Dorsolateral prefrontal cortex (tissue), 120 donors: ENCODE measurements at regions of chr1 and their contacts with region 1.

Region 1: GRCh38 chr1:31065310-31066217 is at the start of gene PUM1:
- DNase-seq: peak; percentile 91 to 98 (median 96)
- H3K4me3 ChIP-seq: peak within 1 kb of the TSS; percentile 60 to 92 (median 79)
- H3K27ac ChIP-seq: peak within 1 kb of the TSS; percentile 79 to 99 (median 95)
- H3K27me3 ChIP-seq: no peaks in the 10 kb centered on the region
- CTCF ChIP-seq: peak in 41 of 56 donors; percentile 4 to 62 (median 29)
- total RNA-seq, gene PUM1: 99.6 to 180 (median 142) TPM

Region 2: GRCh38 chr1:30801771-30802198 is 263.8 kb before region 1 on chr1:
- intact Hi-C with region 1: loop called in 1 of 2 experiments (anchors 10 kb)
- DNase-seq: peak; percentile 78 to 93 (median 88)
- H3K4me3 ChIP-seq: peak overlapping the region in 50 of 59 donors; percentile 8 to 60 (median 39)
- H3K27ac ChIP-seq: peak overlapping the region in 26 of 59 donors; percentile 1 to 84 (median 55)
- H3K27me3 ChIP-seq: no peaks in the 10 kb centered on the region
- CTCF ChIP-seq: peak; percentile 74 to 99 (median 97)

Region 3: GRCh38 chr1:30933874-30934252 is 131.7 kb before region 1 on chr1:
- intact Hi-C with region 1: loop called in 1 of 2 experiments (anchors 10 kb)
- DNase-seq: no peak
- H3K4me3 ChIP-seq: no peak overlapping the region
- H3K27ac ChIP-seq: no peak overlapping the region
- H3K27me3 ChIP-seq: no peaks in the 10 kb centered on the region
- CTCF ChIP-seq: no peak

Region 4: DNA sequence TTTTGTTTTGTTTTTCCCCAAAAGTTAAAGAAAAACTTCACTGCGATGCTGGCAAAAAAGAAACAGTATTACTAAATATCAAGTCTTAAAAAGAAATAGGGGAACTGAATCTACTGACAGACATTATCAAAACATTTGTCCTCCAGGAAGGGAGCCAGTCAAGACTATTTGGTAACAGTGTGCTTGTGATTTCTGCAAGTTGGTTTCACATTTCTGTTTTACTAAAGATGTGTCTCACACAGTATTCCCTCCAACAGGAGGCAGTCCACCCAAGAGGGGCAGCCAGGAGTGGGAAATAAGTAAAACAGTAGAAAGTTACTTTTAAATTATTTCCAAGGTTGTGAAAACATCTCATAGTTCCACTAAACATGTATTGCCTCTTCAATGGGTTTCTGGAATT is 82.6 kb before region 1 on chr1:
- intact Hi-C with region 1: loop called in 1 of 2 experiments (anchors 10 kb)
- DNase-seq: no peak
- H3K4me3 ChIP-seq: no peak overlapping the region
- H3K27ac ChIP-seq: peak overlapping the region in 25 of 59 donors; percentile 3 to 61 (median 31)
- H3K27me3 ChIP-seq: no peaks in the 10 kb centered on the region
- CTCF ChIP-seq: peak in 4 of 56 donors; percentile 6 to 15 (median 12)

Region 5: GRCh38 chr1:31135973-31136600 is 70.5 kb after region 1 on chr1:
- intact Hi-C with region 1: no loop called
- DNase-seq: no peak
- H3K4me3 ChIP-seq: no peak overlapping the region
- H3K27ac ChIP-seq: no peak overlapping the region
- H3K27me3 ChIP-seq: no peaks in the 10 kb centered on the region
- CTCF ChIP-seq: no peak

Region 6: GRCh38 chr1:31155216-31155841 is 89.8 kb after region 1 on chr1:
- intact Hi-C with region 1: loop called (anchors 10 kb)
- DNase-seq: peak in 8 of 10 donors; percentile 12 to 70 (median 40)
- H3K4me3 ChIP-seq: peak overlapping the region; percentile 58 to 88 (median 69)
- H3K27ac ChIP-seq: peak overlapping the region in 17 of 59 donors; percentile 0 to 76 (median 46)
- H3K27me3 ChIP-seq: no peaks in the 10 kb centered on the region
- CTCF ChIP-seq: peak in 43 of 56 donors; percentile 9 to 46 (median 25)

Region 7: GRCh38 chr1:31166462-31166861 is 100.9 kb after region 1 on chr1:
- intact Hi-C with region 1: loop called in 1 of 2 experiments (anchors 10 kb)
- DNase-seq: no peak
- H3K4me3 ChIP-seq: no peak overlapping the region
- H3K27ac ChIP-seq: no peak overlapping the region
- H3K27me3 ChIP-seq: no peaks in the 10 kb centered on the region
- CTCF ChIP-seq: no peak

Region 8: GRCh38 chr1:31296486-31297276 is 231.1 kb after region 1 on chr1 and contains the starts of genes SNRNP40 and ZCCHC17:
- intact Hi-C with region 1: loop called in 1 of 2 experiments (anchors 10 kb)
- DNase-seq: peak; percentile 80 to 97 (median 94)
- H3K4me3 ChIP-seq: peak within 1 kb of the TSS; percentile 55 to 100 (median 94)
- H3K27ac ChIP-seq: peak within 1 kb of the TSS in 58 of 59 donors; percentile 8 to 97 (median 86)
- H3K27me3 ChIP-seq: no peaks in the 10 kb centered on the region
- CTCF ChIP-seq: peak in 54 of 56 donors; percentile 17 to 76 (median 48)
- total RNA-seq, gene SNRNP40: 28.0 to 64.2 (median 38.5) TPM
- total RNA-seq, gene ZCCHC17: 27.3 to 71.7 (median 48.5) TPM